Mammary epithelial cell (primary cell): ENCODE measurements at regions of chr9 and their contacts with region 1.

Region 1: GRCh38 chr9:32884482-32884881 is 101.1 kb downstream of the TMEM215 start:
- DNase-seq: no peak
- H3K4me3 ChIP-seq: no peak overlapping the region
- H3K27ac ChIP-seq: no peak overlapping the region
- H3K4me1 ChIP-seq: no peaks in the 10 kb centered on the region
- H3K27me3 ChIP-seq: no peaks in the 10 kb centered on the region
- CTCF ChIP-seq: no peak

Region 2: DNA sequence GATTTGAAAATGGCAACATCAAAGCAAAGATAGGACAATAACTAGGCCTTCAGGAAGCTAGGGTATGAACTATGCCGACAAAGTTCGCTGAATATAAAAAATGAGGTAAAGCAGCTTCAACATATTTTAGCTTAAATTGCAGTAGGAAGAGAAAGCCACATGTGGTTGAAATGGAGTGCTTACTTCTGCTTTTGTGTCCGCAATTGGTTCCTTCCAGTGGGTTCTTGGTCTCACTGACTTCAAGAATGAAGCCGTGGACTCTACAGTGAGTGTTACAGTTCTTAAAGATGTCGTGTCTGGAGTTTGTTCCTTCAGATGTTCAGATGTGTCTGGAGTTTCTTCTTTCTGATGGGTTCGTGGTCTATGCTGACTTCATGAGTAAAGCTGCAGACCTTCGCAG is 21.7 kb after region 1 on chr9:
- CTCF ChIA-PET with region 1: interaction called, 12 read pairs
- dilution Hi-C with region 1: no loop called
- in situ Hi-C with region 1: no loop called
- intact Hi-C with region 1: no loop called
- DNase-seq: no peak
- H3K4me3 ChIP-seq: no peak overlapping the region
- H3K27ac ChIP-seq: no peak overlapping the region
- H3K4me1 ChIP-seq: no peaks in the 10 kb centered on the region
- H3K27me3 ChIP-seq: peaks cover 3% of the 10 kb centered on the region
- CTCF ChIP-seq: no peak